Naive thymus-derived CD4-positive, alpha-beta T cell (primary cell): ENCODE measurements at regions of chr10 and their contacts with region 1.

Region 1: DNA sequence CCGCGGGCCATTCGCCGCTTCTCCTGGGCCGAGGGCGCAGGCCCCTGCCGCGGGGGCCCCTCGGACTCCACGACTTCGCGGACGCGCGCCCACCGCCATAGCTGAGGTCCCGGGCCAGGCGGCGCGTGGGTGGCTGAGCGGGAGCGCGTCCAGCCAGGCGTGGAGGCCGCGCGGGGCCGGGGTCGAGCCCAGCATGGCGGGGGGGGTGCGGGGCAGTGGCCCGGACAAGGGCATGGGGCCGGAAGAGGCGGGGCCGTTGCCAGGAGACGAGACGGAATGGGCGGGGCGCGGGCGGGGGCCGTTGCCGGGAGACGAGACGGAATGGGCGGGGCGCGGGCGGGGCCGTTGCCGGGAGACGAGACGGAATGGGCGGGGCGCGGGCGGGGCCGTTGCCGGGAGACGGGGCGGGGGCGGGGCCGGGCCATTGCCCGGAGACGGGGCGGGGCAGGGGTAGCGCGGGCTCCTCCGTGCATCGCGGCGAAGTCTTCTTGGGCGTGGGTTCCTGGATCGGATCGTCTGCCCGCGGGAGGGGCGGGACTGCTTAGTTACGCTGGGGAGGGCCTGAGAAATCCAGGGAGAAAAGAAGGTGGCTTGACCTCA is 14.8 kb downstream of the ADAM8 start:
- DNase-seq: peak; percentile 60 to 84 (median 72)
- ATAC-seq: peak; percentile 65
- H3K4me3 ChIP-seq: peak overlapping the region; percentile 52
- H3K4me3 Mint-ChIP-seq: peak overlapping the region; percentile 55 to 83 (median 80)
- H3K27ac ChIP-seq: peak overlapping the region; percentile 87
- H3K27ac Mint-ChIP-seq: peak overlapping the region; percentile 47 to 93 (median 80)
- H3K4me1 ChIP-seq: peaks cover 53 to 68% of the 10 kb centered on the region in 2 donors
- H3K4me1 Mint-ChIP-seq: peaks cover 51 to 81% (median 67%) of the 10 kb centered on the region in 7 donors
- H3K27me3 ChIP-seq: no peaks in the 10 kb centered on the region
- H3K27me3 Mint-ChIP-seq: peaks cover 0 to 2% (median 0%) of the 10 kb centered on the region in 5 donors

Region 2: DNA sequence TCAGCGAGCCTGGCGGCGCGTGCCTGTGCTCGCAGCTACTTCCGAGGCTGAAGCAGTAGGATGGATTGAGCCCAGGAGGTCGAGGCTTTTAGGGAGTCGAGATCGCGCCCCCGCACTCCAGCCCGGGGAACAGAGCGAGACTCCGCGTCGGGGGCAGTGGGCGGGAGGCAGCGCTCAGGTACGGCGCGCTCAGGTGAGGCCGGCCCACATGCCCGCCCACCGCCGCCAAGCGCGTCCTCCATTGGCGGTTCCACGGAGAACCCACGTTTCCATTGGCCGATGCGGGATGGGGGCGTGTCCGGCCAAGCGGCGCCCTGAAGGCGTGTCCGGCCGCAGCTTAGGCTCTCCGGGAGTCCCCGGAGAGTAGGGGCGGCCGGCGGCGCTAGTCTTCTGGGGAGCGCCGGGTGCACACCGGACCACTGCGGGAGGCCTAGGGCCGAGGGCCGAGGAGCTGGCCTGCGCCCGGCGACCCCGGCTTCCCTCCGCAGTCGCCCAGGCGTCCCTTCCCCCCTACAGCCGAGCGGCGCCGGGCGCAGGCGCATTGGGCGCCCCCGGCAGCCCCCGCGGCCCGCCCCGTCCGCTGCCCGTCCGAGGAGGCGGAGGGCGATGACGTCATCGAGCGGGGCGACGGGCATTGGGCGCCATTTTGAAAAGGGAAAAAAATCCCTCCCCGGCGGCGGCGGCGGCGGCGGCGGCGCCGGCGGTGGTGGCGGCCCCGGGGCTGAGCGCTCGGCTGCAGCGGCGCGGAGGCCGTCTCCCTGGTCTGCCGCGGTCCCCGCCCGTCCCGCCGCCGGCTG is 1361.3 kb before region 1 on chr10 and contains the start of gene PPP2R2D:
- CTCF ChIA-PET with region 1: no interaction called
- POLR2A ChIA-PET with region 1: no interaction called
- intact Hi-C with region 1: loop called in 1 of 2 experiments (anchors 5 kb)
- DNase-seq: peak; percentile 95 to 99 (median 97)
- ATAC-seq: peak; percentile 90
- H3K4me3 ChIP-seq: peak within 1 kb of the TSS; percentile 64
- H3K4me3 Mint-ChIP-seq: peak within 1 kb of the TSS; percentile 90 to 95 (median 92)
- H3K27ac ChIP-seq: peak within 1 kb of the TSS; percentile 94
- H3K27ac Mint-ChIP-seq: peak within 1 kb of the TSS; percentile 86 to 97 (median 93)
- H3K4me1 ChIP-seq: peaks cover 34 to 40% of the 10 kb centered on the region in 2 donors
- H3K4me1 Mint-ChIP-seq: peaks cover 30 to 67% (median 61%) of the 10 kb centered on the region in 7 donors
- H3K27me3 ChIP-seq: no peaks in the 10 kb centered on the region
- H3K27me3 Mint-ChIP-seq: peaks cover 0 to 18% (median 0%) of the 10 kb centered on the region in 5 donors
- total RNA-seq, gene PPP2R2D: 37.1 to 61.3 (median 40.1) TPM

Region 3: DNA sequence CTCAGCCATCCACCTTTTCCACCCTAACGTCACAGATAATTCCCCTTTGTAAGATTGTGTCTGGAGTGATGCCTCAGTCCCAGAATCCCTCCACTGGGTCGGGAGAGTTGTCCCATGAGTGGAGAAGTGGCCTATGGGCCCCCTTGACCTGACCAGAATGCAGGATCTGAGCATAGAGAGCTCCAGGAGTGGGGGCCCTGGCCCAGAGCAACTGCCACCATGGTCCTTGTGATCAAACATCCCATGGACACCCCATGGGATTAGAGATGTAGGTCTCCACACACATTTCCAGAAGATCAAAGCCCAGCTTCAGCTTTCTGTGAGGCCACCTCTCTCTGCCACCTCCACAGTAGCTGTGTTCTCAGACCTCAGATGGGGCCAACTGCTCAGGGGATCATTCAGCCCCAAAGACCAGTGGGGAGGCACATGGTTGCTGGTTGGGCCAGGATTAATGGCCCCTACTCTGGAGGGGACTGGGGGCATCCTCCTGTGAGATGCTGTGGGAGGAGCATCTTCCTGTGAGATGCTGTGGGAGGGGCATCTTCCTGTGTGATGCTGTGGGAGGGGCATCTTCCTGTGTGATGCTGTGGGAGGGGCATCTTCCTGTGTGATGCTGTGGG is 1103.6 kb before region 1 on chr10:
- CTCF ChIA-PET with region 1: no interaction called
- POLR2A ChIA-PET with region 1: no interaction called
- intact Hi-C with region 1: loop called in 1 of 2 experiments (anchors 2 kb)
- DNase-seq: peak in 8 of 9 donors; percentile 51 to 71 (median 65)
- ATAC-seq: peak; percentile 58
- H3K4me3 ChIP-seq: no peak overlapping the region
- H3K4me3 Mint-ChIP-seq: peak overlapping the region in 4 of 10 donors; percentile 14 to 64 (median 30)
- H3K27ac ChIP-seq: peak overlapping the region; percentile 72
- H3K27ac Mint-ChIP-seq: peak overlapping the region in 8 of 9 donors; percentile 76 to 100 (median 95)
- H3K4me1 ChIP-seq: peaks cover 23 to 32% of the 10 kb centered on the region in 2 donors
- H3K4me1 Mint-ChIP-seq: peaks cover 13 to 46% (median 34%) of the 10 kb centered on the region in 7 donors
- H3K27me3 ChIP-seq: no peaks in the 10 kb centered on the region
- H3K27me3 Mint-ChIP-seq: no peaks in the 10 kb centered on the region

Region 4: GRCh38 chr10:133139551-133140065 is 122.2 kb before region 1 on chr10:
- CTCF ChIA-PET with region 1: no interaction called
- POLR2A ChIA-PET with region 1: no interaction called
- intact Hi-C with region 1: loop called (anchors 5 kb)
- DNase-seq: no peak
- ATAC-seq: no peak
- H3K4me3 ChIP-seq: no peak overlapping the region
- H3K4me3 Mint-ChIP-seq: no peak overlapping the region
- H3K27ac ChIP-seq: no peak overlapping the region
- H3K27ac Mint-ChIP-seq: no peak overlapping the region
- H3K4me1 ChIP-seq: no peaks in the 10 kb centered on the region
- H3K4me1 Mint-ChIP-seq: peaks cover 4 to 10% (median 6%) of the 10 kb centered on the region in 7 donors
- H3K27me3 ChIP-seq: no peaks in the 10 kb centered on the region
- H3K27me3 Mint-ChIP-seq: peaks cover 0 to 13% (median 12%) of the 10 kb centered on the region in 5 donors

Region 5: GRCh38 chr10:133278577-133279265 is 16.9 kb after region 1 on chr10:
- CTCF ChIA-PET with region 1: interaction called, 34 read pairs
- POLR2A ChIA-PET with region 1: interaction called, 37 read pairs
- intact Hi-C with region 1: loop called (anchors 1 kb)
- DNase-seq: peak in 3 of 9 donors; percentile 17 to 60 (median 53)
- ATAC-seq: peak; percentile 69
- H3K4me3 ChIP-seq: peak overlapping the region; percentile 27
- H3K4me3 Mint-ChIP-seq: peak overlapping the region; percentile 50 to 84 (median 66)
- H3K27ac ChIP-seq: peak overlapping the region; percentile 50
- H3K27ac Mint-ChIP-seq: peak overlapping the region; percentile 66 to 93 (median 86)
- H3K4me1 ChIP-seq: peaks cover 22 to 34% of the 10 kb centered on the region in 2 donors
- H3K4me1 Mint-ChIP-seq: peaks cover 11 to 36% (median 21%) of the 10 kb centered on the region in 7 donors
- H3K27me3 ChIP-seq: no peaks in the 10 kb centered on the region
- H3K27me3 Mint-ChIP-seq: no peaks in the 10 kb centered on the region

Region 6: DNA sequence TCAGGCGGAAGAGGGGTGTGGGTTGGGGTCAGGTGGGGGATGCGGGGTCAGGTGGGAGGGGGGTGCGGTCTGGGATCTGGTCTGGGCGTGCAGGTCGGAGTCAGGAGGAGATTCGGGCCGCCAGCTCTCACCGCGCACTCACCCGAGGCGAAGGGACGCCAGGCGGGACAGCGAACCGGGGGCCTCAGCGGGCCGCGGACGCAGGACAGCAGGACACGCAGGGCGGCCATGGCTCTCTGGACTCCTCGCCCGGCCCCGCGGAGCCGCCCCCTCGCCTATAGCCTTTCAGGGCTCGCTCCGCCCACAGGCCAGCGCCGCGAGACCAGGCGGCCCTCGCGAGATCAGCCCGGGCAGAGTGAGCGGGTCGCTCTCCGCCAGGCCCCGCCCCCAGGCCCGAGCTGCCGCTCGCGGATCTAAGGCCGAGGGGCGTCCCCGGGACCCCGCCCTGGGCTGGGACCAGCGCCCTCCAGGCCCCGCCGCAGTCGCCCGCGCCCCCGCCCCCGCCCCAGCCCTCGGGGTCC is 111.3 kb after region 1 on chr10 and contains the start of gene ECHS1:
- CTCF ChIA-PET with region 1: no interaction called
- POLR2A ChIA-PET with region 1: no interaction called
- intact Hi-C with region 1: loop called (anchors 5 kb)
- DNase-seq: peak; percentile 81 to 99 (median 90)
- ATAC-seq: peak; percentile 99
- H3K4me3 ChIP-seq: peak within 1 kb of the TSS; percentile 68
- H3K4me3 Mint-ChIP-seq: peak within 1 kb of the TSS; percentile 57 to 92 (median 81)
- H3K27ac ChIP-seq: peak within 1 kb of the TSS; percentile 82
- H3K27ac Mint-ChIP-seq: peak within 1 kb of the TSS; percentile 14 to 83 (median 67)
- H3K4me1 ChIP-seq: peaks cover 0 to 3% of the 10 kb centered on the region in 2 donors
- H3K4me1 Mint-ChIP-seq: peaks cover 0 to 21% (median 12%) of the 10 kb centered on the region in 7 donors
- H3K27me3 ChIP-seq: no peaks in the 10 kb centered on the region
- H3K27me3 Mint-ChIP-seq: peaks cover 0 to 14% (median 0%) of the 10 kb centered on the region in 5 donors
- total RNA-seq, gene ECHS1: 17.5 to 39.8 (median 28.9) TPM